AG04450 (cell line): ENCODE measurements at regions of chr21 and their contacts with region 1.

Region 1: GRCh38 chr21:39388038-39388810 is 39.3 kb upstream of the HMGN1 start:
- DNase-seq: no peak
- H3K4me3 ChIP-seq: peak overlapping the region; percentile 63
- H3K27ac ChIP-seq: peak overlapping the region; percentile 65
- H3K27me3 ChIP-seq: no peaks in the 10 kb centered on the region
- CTCF ChIP-seq: peak; percentile 86

Region 2: DNA sequence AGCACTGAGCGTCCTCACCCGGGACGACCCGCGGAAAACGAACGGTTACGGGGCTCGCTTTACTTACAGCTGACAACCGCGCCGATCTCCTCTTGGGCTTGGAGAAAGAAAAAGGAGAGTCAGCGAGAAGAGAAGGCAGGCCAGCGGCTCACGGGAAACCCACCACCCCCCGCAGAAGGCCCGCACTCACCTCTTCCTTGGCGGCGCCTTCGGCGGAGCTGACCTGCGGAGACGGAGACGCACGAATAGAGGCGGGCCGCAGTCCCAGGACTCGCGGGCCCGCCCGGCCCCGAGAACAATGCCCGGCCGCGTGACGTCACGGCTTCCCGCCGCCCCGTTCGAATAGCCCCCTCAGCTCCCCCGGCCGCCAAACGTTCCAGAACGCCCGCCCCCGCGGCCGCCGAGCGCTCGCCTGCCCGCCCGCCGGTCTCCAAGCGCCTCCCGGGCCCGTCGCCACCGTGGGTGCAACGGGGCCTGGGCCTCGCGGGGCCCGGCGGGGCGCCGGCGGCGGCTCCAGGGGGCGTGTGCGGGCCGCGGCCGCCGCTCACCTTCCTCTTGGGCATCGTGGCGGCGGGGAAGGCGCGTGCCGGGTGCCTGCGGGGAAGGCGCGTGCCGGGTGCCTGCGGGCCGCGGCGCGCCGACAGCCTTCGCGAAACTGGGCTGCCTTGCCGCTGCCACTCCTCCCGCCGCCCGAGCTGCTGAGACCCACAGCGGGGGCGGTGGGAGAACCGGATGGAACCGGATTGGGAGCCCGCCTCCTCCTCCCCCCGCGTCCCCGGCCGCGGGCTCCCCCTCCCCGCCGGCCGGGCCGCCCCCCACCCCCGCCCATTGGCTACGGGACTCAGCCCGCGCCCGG is 39.6 kb before region 1 on chr21 and contains the start of gene HMGN1:
- CTCF ChIA-PET with region 1: interaction called, 17 read pairs
- POLR2A ChIA-PET with region 1: interaction called, 3 read pairs
- DNase-seq: peak; percentile 68
- H3K4me3 ChIP-seq: peak within 1 kb of the TSS; percentile 86
- H3K27ac ChIP-seq: peak within 1 kb of the TSS; percentile 82
- H3K27me3 ChIP-seq: no peaks in the 10 kb centered on the region
- CTCF ChIP-seq: no peak
- polyA plus RNA-seq, gene HMGN1: 232 and 288 TPM in 2 replicates

Region 3: GRCh38 chr21:39373644-39374043 is 14.6 kb before region 1 on chr21:
- CTCF ChIA-PET with region 1: no interaction called
- POLR2A ChIA-PET with region 1: no interaction called
- DNase-seq: no peak
- H3K4me3 ChIP-seq: no peak overlapping the region
- H3K27ac ChIP-seq: no peak overlapping the region
- H3K27me3 ChIP-seq: peaks cover 6% of the 10 kb centered on the region
- CTCF ChIP-seq: peak; percentile 33